Activated T-helper 1 cell treated with anti-CD3 and anti-CD28 coated beads, Interleukin-12 subunit alpha, Interleukin-12 subunit beta, Interleukin-2, Interleukin-4 antibody, amounts not matched to agents 30 ng/mL and 10 ng/mL and 1 ng/mL, durations not matched to agents 14 hours and 24 hours and 36 hours (primary cell): ENCODE measurements at regions of chr14 and their contacts with region 1.

Region 1: GRCh38 chr14:21557084-21557901 is 22.6 kb downstream of the OR10G3 start:
- DNase-seq: peak; percentile 62
- H3K4me3 Mint-ChIP-seq: no peak overlapping the region
- H3K27ac Mint-ChIP-seq: peak overlapping the region; percentile 68
- H3K4me1 Mint-ChIP-seq: peaks cover 8% of the 10 kb centered on the region
- H3K27me3 Mint-ChIP-seq: no peaks in the 10 kb centered on the region

Region 2: DNA sequence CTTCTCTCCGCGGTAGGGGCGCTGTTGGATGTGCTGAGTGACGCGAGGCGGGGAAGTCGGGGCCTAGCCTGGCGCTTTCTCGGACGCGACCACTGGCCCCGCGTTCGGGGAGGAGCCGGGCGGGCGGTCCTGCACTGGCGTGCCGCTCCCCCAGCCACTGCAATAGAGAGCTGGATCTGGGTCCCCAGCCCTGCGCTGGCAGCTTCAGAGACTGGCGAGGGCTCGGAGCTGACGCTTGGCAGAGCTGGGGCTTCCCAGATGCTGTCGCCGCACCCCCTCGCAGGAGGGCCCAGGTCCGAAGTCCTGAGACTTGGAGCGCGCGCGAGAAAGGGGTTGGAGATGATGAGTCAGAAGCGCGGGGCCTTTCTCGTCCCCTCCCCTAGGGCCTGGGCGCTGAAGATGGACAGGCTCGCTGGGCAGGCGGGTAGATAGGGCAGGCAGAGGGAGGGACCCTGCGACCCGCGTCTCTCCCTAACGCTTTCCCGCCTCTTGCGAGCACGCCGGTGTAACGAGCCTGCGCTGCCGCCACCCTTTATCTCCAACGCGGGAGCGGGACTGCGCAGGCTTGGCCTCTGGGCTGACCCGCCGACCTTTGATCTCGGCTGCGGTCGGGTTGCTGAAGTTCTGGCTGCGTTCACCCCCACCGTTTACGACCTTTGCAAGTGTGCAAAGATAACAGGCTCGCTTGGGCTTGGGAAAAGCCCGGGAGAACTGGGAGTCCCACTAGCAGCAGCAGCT is 453.4 kb before region 1 on chr14:
- intact Hi-C with region 1: loop called (anchors 10 kb)
- DNase-seq: peak; percentile 92
- H3K4me3 Mint-ChIP-seq: peak overlapping the region; percentile 93
- H3K27ac Mint-ChIP-seq: peak overlapping the region; percentile 97
- H3K4me1 Mint-ChIP-seq: peaks cover 56% of the 10 kb centered on the region
- H3K27me3 Mint-ChIP-seq: peaks cover 6% of the 10 kb centered on the region

Region 3: GRCh38 chr14:21367582-21368144 is 189.6 kb before region 1 on chr14:
- intact Hi-C with region 1: loop called (anchors 5 kb)
- DNase-seq: no peak
- H3K4me3 Mint-ChIP-seq: no peak overlapping the region
- H3K27ac Mint-ChIP-seq: no peak overlapping the region
- H3K4me1 Mint-ChIP-seq: peaks cover 10% of the 10 kb centered on the region
- H3K27me3 Mint-ChIP-seq: no peaks in the 10 kb centered on the region

Region 4: GRCh38 chr14:21437063-21437901 is 120.0 kb before region 1 on chr14:
- intact Hi-C with region 1: loop called (anchors 1 kb)
- DNase-seq: peak; percentile 97
- H3K4me3 Mint-ChIP-seq: peak overlapping the region; percentile 93
- H3K27ac Mint-ChIP-seq: peak overlapping the region; percentile 73
- H3K4me1 Mint-ChIP-seq: peaks cover 67% of the 10 kb centered on the region
- H3K27me3 Mint-ChIP-seq: no peaks in the 10 kb centered on the region

Region 5: DNA sequence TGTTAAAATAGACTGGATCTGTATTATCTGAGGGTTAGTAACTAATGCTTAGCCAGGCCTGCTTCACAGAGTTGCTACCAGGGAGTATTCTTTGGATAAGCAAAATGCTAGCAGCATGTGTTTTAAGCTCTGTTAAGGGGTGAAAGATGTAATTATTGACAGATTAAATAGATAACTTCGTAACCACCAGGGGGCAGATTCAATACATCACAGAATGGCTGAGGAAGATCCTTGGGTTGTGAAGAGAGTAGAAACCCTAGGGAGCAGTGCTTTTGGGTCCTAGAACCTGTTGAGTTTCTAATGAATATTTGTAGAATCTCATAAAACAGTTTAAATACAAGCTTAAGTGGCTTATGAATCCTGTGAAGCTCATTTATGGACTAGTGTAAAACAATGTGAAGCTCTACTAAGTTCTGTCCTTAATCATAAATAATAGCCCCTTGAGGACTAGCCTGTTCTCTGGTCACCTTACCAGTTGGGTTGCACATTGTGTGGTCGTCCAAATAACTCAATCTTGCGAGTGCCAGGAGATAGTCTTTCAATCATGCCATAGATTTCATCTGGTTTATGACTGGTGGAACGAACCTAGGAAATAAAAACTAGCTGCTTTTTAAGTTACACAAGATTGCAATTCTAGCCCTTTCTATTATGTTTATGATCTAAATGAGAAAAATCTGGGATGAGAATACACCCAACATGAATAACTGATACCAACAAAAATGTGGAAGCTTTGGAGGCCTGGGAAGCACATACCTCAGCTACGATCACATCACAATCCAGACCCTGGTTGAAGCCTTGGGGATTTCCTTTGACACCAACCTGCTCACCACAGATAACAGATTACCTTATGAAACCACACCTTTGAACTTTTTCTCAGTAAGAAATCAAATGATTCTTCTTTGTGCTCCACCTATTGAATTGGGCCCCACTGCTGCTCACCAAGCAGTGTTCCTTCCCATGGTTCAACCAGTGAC is 58.5 kb before region 1 on chr14:
- intact Hi-C with region 1: loop called (anchors 1 kb)
- DNase-seq: no peak
- H3K4me3 Mint-ChIP-seq: no peak overlapping the region
- H3K27ac Mint-ChIP-seq: peak overlapping the region; percentile 36
- H3K4me1 Mint-ChIP-seq: peaks cover 40% of the 10 kb centered on the region
- H3K27me3 Mint-ChIP-seq: no peaks in the 10 kb centered on the region